SK-N-SH (cell line): ENCODE measurements at regions of chr3 and their contacts with region 1.

Region 1: DNA sequence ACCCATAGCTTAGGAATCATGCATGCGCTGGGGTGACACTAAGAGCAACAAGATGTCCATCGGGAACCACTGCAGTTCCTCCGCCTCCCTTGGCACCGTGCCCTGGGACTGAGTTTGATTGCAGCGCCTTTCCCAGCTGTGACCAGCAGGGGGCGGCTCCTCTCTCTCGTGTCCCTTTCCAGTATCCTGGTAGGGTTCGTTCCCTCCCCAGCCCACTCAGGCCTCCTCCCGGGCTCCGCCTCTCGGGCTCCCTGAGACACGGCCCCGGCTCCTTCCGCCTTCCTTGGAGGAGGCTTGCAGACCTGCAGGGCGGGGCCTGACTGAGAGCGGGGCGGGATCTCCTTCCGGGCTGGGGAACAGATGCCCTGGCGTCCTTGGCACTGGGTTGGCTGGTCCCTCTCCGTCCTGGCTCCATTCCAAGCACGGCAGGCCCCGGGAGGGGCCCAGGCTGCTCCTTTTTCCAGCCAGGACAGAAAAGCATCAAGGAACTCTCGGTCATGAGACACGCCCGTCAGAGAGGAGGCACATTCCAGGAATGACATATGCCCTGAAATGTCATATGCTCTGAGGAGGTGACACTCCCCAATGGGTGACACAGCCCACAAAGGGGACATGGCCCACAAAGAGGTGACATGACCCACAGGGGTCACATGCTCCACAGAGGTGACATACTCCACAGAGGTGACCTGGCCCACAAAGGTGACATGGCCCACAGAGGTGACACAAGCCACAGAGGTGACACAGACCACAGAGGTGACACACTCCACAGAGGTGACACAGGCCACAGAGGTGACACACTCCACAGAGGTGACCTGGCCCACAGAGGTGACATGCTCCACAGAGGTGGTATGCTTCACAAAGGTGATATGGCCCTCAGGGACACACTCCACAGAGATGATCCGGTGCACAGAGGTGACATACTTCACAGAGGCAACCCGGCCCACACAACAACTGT is 79.0 kb downstream of the ABHD5 start:
- DNase-seq: peak; percentile 81
- H3K4me3 ChIP-seq: peak overlapping the region; percentile 35 to 49; a peak in 3 of 4 replicates
- H3K27ac ChIP-seq: peak overlapping the region; percentile 75 to 96
- H3K4me1 ChIP-seq: peaks cover 31 to 73% of the 10 kb centered on the region in 2 experiments
- H3K27me3 ChIP-seq: no peaks in the 10 kb centered on the region
- CTCF ChIP-seq: peak; percentile 91
- EP300 ChIP-seq: peak in 1 of 2 experiments; percentile 41; a peak in 1 of 4 replicates
- RAD21 ChIP-seq: peak; percentile 78

Region 2: GRCh38 chr3:43759297-43759782 is 10.4 kb before region 1 on chr3:
- CTCF ChIA-PET with region 1: interaction called, 11 read pairs
- POLR2A ChIA-PET with region 1: interaction called, 3 read pairs
- DNase-seq: no peak
- H3K4me3 ChIP-seq: no peak overlapping the region
- H3K27ac ChIP-seq: peak overlapping the region; percentile 19 to 92; a peak in 3 of 4 replicates
- H3K4me1 ChIP-seq: peaks cover 14 to 42% of the 10 kb centered on the region in 2 experiments; a peak in 3 of 4 replicates
- H3K27me3 ChIP-seq: no peaks in the 10 kb centered on the region
- CTCF ChIP-seq: peak; percentile 29; the same call in 1 of the 2 replicates
- EP300 ChIP-seq: no peak; a peak in 1 of 4 replicates
- RAD21 ChIP-seq: peak; percentile 43

Region 3: DNA sequence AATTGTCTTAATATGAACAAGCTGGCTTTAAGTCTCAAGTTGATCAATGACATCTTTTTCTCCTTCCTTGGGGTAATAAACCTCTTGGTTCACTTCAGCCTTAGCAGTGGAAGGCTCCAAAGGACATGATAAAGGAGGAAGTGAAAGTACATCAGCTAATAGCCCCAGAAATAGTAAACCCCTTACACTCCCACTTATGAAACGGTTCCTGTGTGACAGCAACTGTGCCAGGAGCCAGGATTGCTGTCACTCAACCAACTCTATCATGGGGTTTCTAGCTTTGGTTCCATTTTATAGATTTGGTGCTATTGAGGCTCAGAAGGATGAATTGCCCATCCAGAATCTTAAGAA is 137.7 kb after region 1 on chr3:
- CTCF ChIA-PET with region 1: no interaction called
- POLR2A ChIA-PET with region 1: no interaction called
- DNase-seq: no peak
- H3K4me3 ChIP-seq: no peak overlapping the region
- H3K27ac ChIP-seq: no peak overlapping the region
- H3K4me1 ChIP-seq: peaks cover 0 to 7% of the 10 kb centered on the region in 2 experiments; a peak in 1 of 4 replicates
- H3K27me3 ChIP-seq: no peaks in the 10 kb centered on the region
- CTCF ChIP-seq: no peak
- EP300 ChIP-seq: no peak
- RAD21 ChIP-seq: no peak

Region 4: DNA sequence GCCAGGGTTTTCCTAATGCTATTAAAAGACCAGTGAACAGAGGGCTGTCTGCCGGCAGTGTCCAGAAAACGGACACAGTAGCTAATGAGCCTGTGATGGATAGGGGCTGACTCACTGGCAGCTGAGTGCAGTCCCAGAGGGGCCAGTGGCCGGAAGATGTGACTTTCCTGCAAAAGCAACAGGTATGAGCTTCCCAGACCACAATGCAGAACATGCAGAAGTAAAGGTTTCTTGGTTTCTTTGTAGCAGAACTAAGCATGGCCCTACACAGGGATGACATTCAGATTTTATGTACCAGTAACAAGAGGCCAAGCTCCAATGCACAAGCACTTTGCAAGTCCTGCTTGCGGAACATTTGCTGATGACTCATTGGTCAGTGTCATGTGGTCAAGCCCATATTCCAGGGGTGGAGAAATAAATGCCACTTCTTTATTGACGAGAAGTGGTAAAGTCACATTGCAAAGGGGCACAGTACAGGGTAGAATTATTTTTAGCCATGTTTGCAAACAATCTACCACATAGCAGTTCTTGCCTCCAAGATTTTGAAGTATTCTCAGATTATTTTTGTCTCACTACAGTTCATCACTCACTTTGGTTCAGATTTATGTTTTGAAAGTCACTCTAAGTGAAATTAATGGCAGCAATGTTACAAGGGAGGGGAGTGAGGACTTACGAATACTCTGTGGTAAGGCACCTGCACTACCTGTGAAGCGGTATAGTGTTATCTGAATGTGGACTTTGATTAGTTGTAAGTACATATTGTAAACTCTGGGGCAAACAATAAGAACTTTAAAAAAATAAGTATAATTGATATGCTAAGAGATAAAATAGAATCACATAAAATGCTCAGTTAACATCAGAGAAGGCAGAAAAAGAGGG is 184.3 kb after region 1 on chr3:
- CTCF ChIA-PET with region 1: no interaction called
- POLR2A ChIA-PET with region 1: no interaction called
- DNase-seq: no peak
- H3K4me3 ChIP-seq: peak overlapping the region in 1 of 2 experiments; percentile 27; a peak in 1 of 4 replicates
- H3K27ac ChIP-seq: no peak overlapping the region; a peak in 1 of 4 replicates
- H3K4me1 ChIP-seq: peaks cover 0 to 33% of the 10 kb centered on the region in 2 experiments; a peak in 2 of 4 replicates
- H3K27me3 ChIP-seq: no peaks in the 10 kb centered on the region; the same call in 1 of the 2 replicates
- CTCF ChIP-seq: no peak
- EP300 ChIP-seq: no peak
- RAD21 ChIP-seq: no peak